CD4-positive, alpha-beta memory T cell (primary cell): ENCODE measurements at regions of chr15 and their contacts with region 1.

Region 1: GRCh38 chr15:66619151-66619903 is 53.5 kb upstream of the LCTL start:
- DNase-seq: peak in 3 of 5 donors; percentile 16
- H3K4me3 ChIP-seq: no peak overlapping the region
- H3K4me3 Mint-ChIP-seq: no peak overlapping the region
- H3K27ac ChIP-seq: no peak overlapping the region
- H3K27ac Mint-ChIP-seq: no peak overlapping the region
- H3K4me1 ChIP-seq: no peaks in the 10 kb centered on the region
- H3K4me1 Mint-ChIP-seq: no peaks in the 10 kb centered on the region
- H3K27me3 ChIP-seq: no peaks in the 10 kb centered on the region
- H3K27me3 Mint-ChIP-seq: peaks cover 14 to 20% of the 10 kb centered on the region in 2 donors

Region 2: GRCh38 chr15:66603301-66604179 is 15.8 kb before region 1 on chr15:
- CTCF ChIA-PET with region 1: interaction called, 13 read pairs
- POLR2A ChIA-PET with region 1: no interaction called
- intact Hi-C with region 1: no loop called
- DNase-seq: peak in 4 of 5 donors; percentile 41 to 49 (median 48)
- H3K4me3 ChIP-seq: no peak overlapping the region
- H3K4me3 Mint-ChIP-seq: no peak overlapping the region
- H3K27ac ChIP-seq: no peak overlapping the region
- H3K27ac Mint-ChIP-seq: no peak overlapping the region
- H3K4me1 ChIP-seq: no peaks in the 10 kb centered on the region
- H3K4me1 Mint-ChIP-seq: peaks cover 0 to under 1% (median under 1%) of the 10 kb centered on the region in 4 donors
- H3K27me3 ChIP-seq: no peaks in the 10 kb centered on the region
- H3K27me3 Mint-ChIP-seq: peaks cover 5 to 12% of the 10 kb centered on the region in 2 donors

Region 3: DNA sequence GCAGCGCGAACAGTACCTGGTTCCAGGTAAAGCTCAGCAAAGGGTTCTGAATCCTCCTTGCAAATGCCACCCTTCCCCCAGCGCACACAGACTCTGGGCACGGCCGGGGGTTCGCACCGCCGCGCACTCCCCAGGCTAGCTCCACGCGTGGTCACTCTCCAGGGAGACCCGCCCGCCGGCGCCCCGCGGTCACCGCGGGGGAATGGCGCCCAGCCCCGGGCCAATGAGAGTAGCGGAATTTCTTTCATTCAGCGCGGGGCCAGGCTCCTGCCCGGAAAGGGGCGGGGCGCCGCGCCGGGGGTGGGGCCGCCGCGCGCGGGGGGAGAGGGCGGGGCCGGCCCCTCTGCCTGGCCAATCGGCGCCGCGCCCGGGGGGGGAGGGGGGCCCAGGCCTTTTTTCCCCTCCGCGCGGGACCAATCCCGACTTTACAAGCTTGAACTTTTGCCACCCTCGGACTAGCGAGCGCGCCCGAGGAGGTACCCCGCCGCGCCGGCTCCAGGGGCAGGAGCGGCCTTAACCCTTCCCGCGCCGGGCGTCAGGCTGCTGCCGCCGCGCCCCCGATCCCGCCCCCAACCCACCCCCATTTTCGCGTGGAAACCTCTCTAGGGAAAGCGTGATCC is 81.6 kb after region 1 on chr15:
- CTCF ChIA-PET with region 1: interaction called, 3 read pairs
- POLR2A ChIA-PET with region 1: no interaction called
- intact Hi-C with region 1: loop called (anchors 10 kb)
- DNase-seq: peak; percentile 76 to 82 (median 79)
- H3K4me3 ChIP-seq: peak overlapping the region; percentile 53 to 86
- H3K4me3 Mint-ChIP-seq: peak overlapping the region; percentile 86 to 92 (median 89)
- H3K27ac ChIP-seq: no peak overlapping the region
- H3K27ac Mint-ChIP-seq: peak overlapping the region in 5 of 7 donors; percentile 66 to 90 (median 81)
- H3K4me1 ChIP-seq: peaks cover 19% of the 10 kb centered on the region
- H3K4me1 Mint-ChIP-seq: peaks cover 11 to 32% (median 19%) of the 10 kb centered on the region in 4 donors
- H3K27me3 ChIP-seq: peaks cover 15% of the 10 kb centered on the region
- H3K27me3 Mint-ChIP-seq: peaks cover 8 to 22% of the 10 kb centered on the region in 2 donors